WTC11 (cell line): ENCODE measurements at regions of chr3 and their contacts with region 1.

Region 1: DNA sequence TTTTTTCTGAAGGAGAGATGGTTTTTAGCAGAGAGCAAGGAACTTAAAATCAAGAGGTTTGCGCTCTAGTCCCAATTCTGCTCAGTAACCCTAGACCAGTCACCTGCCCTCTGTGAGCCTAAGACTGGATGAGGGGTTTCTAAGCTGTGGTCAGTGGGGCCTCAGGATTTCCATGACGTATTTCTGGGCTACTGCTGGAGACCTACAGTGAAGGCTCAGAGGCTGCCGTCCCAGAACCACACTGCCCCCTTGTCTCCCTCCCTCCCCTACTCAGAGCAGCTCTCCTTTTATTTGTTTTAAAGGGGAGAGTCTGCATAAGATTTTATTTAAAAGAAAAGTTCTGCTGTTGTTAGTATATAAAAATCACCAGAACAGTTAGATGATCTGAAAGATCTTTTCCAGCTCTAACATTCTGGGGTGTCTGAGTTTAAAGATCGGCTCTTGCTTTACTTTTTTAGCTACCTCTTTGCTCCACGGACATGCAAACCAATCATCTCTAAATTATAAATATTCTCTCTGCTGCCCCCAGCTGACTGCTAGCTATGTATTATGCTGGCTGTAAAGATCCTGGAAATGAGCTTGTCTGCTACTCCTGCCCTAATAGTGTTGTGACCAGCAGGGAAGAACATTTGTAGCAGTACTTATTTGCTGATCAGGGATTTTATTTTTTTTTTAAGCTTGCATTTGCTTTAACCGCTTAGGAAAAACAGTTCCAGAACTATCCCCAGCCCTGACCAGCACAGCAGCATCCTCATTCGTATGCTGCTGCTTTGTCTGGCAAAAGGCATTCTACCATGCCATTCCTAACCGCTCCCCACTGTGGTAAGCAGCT is 28.6 kb upstream of the NDUFB4 start:
- DNase-seq: peak; percentile 24
- ATAC-seq: peak; percentile 85
- H3K4me3 Mint-ChIP-seq: peak overlapping the region; percentile 47
- H3K27ac Mint-ChIP-seq: peak overlapping the region; percentile 92
- H3K4me1 Mint-ChIP-seq: peaks cover 40% of the 10 kb centered on the region
- H3K27me3 Mint-ChIP-seq: peaks cover 3% of the 10 kb centered on the region; the same call in 1 of the 2 replicates
- CTCF ChIP-seq: no peak

Region 2: GRCh38 chr3:120524171-120524923 is 43.2 kb before region 1 on chr3:
- CTCF ChIA-PET with region 1: no interaction called
- POLR2A ChIA-PET with region 1: no interaction called
- DNase-seq: no peak
- ATAC-seq: no peak
- H3K4me3 Mint-ChIP-seq: no peak overlapping the region
- H3K27ac Mint-ChIP-seq: no peak overlapping the region
- H3K4me1 Mint-ChIP-seq: peaks cover 14% of the 10 kb centered on the region
- H3K27me3 Mint-ChIP-seq: no peaks in the 10 kb centered on the region
- CTCF ChIP-seq: no peak

Region 3: GRCh38 chr3:120596116-120596852 is 28.7 kb after region 1 on chr3 and contains the start of gene NDUFB4:
- CTCF ChIA-PET with region 1: interaction called, 18 read pairs
- POLR2A ChIA-PET with region 1: interaction called, 4 read pairs
- DNase-seq: peak; percentile 98
- ATAC-seq: peak; percentile 98
- H3K4me3 Mint-ChIP-seq: peak within 1 kb of the TSS; percentile 89
- H3K27ac Mint-ChIP-seq: peak within 1 kb of the TSS; percentile 96
- H3K4me1 Mint-ChIP-seq: peaks cover 8% of the 10 kb centered on the region
- H3K27me3 Mint-ChIP-seq: peaks cover 3% of the 10 kb centered on the region; the same call in 1 of the 2 replicates
- CTCF ChIP-seq: no peak
- total RNA-seq, gene NDUFB4: 174 to 237 TPM (median 223 TPM) in 3 replicates

Region 4: DNA sequence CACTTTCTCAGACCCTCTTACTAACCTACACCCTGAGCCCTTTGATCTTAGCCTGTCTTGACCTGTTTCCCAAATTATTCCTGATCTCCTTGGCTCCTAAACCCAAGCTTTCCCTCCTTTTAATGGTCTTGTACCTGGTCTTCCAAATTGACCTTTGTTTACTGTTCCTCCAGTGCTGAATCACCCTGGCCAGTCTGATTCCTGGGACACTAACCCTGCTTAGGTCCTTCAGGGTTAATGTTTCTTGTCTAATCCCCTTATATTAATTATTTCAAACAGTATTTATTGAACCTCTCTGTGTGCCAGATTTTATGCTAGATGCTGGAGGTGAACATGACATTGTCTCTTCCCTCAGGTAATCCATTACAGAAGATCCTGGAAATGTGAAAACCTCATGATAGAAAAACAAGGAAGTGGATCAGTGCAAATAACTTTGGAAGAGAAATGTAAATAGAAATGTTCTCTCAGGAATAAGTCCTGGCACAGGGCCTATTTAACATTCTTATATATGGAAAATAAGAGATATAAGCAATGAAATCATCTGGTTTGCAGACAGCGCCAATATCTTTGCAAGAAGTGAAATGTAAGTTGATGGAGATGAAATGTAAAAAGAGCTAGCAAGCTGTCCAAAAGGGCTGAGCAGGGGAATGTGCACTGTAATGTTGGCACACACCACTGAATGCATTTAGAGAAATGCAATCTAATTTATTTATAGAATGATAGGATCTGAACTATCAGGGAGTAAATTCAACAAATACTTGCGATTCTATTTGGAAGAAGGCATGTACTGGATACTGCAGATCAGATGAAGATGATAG is 93.7 kb after region 1 on chr3:
- CTCF ChIA-PET with region 1: no interaction called
- POLR2A ChIA-PET with region 1: no interaction called
- DNase-seq: no peak
- ATAC-seq: no peak
- H3K4me3 Mint-ChIP-seq: no peak overlapping the region
- H3K27ac Mint-ChIP-seq: no peak overlapping the region; the same call in 1 of the 2 replicates
- H3K4me1 Mint-ChIP-seq: no peaks in the 10 kb centered on the region
- H3K27me3 Mint-ChIP-seq: peaks cover 3% of the 10 kb centered on the region; the same call in 1 of the 2 replicates
- CTCF ChIP-seq: no peak